ENCODE measurements at regions of chrX and their contacts with region 1.

Region 1: DNA sequence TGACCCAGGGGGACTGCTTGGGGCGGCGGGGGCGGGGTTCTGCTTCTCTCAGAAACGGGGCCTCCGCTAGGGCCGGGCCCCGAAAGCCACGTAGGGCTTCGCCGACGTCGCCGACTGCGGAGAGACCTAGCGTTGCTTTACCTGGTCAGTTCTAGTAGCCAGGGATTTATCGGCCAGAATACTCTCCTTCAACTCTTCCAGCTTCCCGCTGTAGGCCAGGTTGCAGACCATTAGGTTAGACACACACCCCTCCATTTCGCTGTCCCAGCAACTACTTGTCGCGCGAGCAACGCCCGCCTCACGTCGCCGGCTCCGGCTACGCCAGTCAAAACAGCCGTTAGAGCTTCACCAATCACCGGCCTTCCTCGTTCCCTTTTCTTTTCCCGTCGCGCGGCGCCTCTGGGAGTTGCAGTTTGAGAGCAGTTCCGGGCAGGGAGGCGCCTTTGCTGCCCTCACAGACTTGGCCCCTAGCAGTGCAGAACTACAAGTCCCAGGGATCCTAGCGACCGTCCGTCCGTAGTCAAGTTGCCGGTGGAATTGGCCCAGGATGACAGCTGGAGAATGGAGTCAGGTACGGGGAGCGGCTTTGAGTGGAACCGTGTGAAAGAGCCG is at the starts of genes ATG4A and PSMD10:
- DNase-seq: peak; percentile 87 to 96
- H3K4me3 ChIP-seq: peak within 1 kb of the TSS; percentile 51 to 77
- H3K27ac ChIP-seq: peak within 1 kb of the TSS; percentile 62 to 80
- H3K4me1 ChIP-seq: no peaks in the 10 kb centered on the region
- H3K27me3 ChIP-seq: no peaks in the 10 kb centered on the region
- CTCF ChIP-seq: no peak
- total RNA-seq, gene ATG4A: 15.0 TPM
- total RNA-seq, gene PSMD10: 11.5 TPM

Region 2: GRCh38 chrX:106802387-106803275 is 1288.7 kb before region 1 on chrX and contains the start of gene TBC1D8B:
- intact Hi-C with region 1: loop called (anchors 2 kb)
- DNase-seq: peak; percentile 22 to 87
- H3K4me3 ChIP-seq: peak within 1 kb of the TSS; percentile 62 to 69
- H3K27ac ChIP-seq: peak within 1 kb of the TSS in 1 of 2 donors; percentile 11
- H3K4me1 ChIP-seq: no peaks in the 10 kb centered on the region
- H3K27me3 ChIP-seq: no peaks in the 10 kb centered on the region
- CTCF ChIP-seq: no peak
- total RNA-seq, gene TBC1D8B: 7.1 TPM

Region 3: DNA sequence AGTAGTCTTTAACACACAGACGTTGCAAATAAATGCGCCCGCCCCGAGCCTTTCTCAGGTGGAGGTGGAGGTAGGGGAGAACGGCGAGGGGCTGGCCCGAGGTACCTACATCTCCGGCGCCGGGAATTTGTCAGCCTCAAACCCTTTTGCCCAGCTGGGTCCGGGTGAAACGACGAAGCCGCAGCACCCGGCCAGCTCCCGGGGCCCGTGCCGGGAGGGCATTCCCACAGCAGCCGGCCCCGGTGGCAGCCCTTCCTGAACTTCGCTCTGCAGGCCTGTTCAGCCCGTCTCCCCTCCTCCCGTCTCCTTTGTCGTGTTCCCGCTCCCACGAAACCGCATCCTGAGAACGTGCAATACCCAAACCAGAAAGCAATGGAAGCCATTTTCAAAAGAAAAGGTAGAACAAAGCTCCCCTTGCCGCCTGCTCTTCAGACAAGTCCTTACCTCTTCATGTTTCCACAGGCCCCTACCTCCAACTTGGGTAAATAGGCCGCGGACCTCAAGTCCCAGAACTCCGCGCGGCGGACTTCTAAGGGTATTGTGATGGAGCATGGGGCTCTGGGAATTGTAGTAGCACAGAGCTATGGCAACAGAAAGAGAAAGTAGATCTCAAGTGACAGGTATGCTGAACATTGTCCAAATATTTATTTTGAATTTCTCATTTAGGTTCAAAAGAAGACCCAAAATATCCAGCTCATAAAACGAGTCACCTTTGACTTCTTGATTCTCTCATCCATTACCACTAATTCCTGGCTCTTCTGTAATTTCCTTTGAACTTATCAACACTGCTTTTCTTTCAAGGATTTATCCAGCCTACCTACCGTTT is 972.8 kb before region 1 on chrX and contains the start of gene RBM41:
- intact Hi-C with region 1: loop called (anchors 5 kb)
- DNase-seq: peak; percentile 48 to 80
- H3K4me3 ChIP-seq: peak within 1 kb of the TSS; percentile 60 to 66
- H3K27ac ChIP-seq: peak within 1 kb of the TSS; percentile 8 to 42
- H3K4me1 ChIP-seq: no peaks in the 10 kb centered on the region
- H3K27me3 ChIP-seq: no peaks in the 10 kb centered on the region
- CTCF ChIP-seq: no peak
- total RNA-seq, gene RBM41: 4.6 TPM

Region 4: DNA sequence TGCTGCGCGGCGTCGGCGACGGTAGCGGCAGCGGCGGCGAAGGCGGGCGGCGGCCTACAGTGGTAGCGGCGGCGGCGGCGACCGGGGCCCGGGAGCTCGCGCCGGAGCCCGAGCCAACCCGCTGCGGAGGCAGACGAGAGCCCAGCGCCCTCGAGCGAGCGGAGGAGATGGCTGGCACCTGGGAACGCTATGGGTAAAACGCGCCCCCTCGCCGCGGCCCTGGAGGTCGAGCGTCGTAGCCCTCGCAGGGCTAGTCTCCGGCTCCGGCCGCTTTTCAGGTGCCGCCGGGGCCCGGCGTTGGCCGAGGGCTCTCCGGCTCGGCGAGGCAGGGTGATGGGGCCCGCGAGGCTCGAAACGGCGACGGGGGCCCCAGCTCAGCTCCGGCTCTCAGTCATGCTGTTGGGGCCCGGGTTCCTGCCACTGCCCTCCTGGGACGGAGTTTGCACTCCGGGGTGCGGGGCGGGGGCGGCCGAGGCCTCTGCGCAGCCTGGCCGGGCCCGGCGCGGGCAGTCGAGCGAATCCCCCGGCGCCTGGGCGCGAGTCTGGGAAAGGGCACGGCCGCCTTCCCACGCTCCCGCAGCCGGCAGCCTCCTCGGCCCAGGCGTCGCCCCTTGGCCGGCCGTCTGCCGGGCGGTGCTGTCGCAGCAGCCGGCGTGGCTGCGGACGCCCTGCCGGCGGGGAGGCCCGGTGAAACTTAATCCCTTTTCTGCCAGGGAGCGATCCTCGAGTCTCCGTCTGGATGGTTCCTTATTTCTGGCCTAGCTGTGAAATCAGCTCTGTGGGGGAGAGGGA is 264.9 kb before region 1 on chrX:
- intact Hi-C with region 1: loop called (anchors 5 kb)
- DNase-seq: peak in 1 of 2 donors; percentile 65
- H3K4me3 ChIP-seq: peak overlapping the region; percentile 57 to 73
- H3K27ac ChIP-seq: peak overlapping the region; percentile 93 to 98
- H3K4me1 ChIP-seq: no peaks in the 10 kb centered on the region
- H3K27me3 ChIP-seq: peaks cover 4% of the 10 kb centered on the region
- CTCF ChIP-seq: no peak

Region 5: GRCh38 chrX:108029928-108030711 is 61.3 kb before region 1 on chrX:
- intact Hi-C with region 1: no loop called
- DNase-seq: no peak
- H3K4me3 ChIP-seq: no peak overlapping the region
- H3K27ac ChIP-seq: no peak overlapping the region
- H3K4me1 ChIP-seq: no peaks in the 10 kb centered on the region
- H3K27me3 ChIP-seq: no peaks in the 10 kb centered on the region
- CTCF ChIP-seq: no peak

Region 6: GRCh38 chrX:109536439-109537336 is 1445.3 kb after region 1 on chrX and contains the start of gene NXT2:
- intact Hi-C with region 1: loop called (anchors 5 kb)
- DNase-seq: peak; percentile 67 to 93
- H3K4me3 ChIP-seq: peak within 1 kb of the TSS; percentile 55 to 66
- H3K27ac ChIP-seq: peak within 1 kb of the TSS; percentile 86 to 89
- H3K4me1 ChIP-seq: no peaks in the 10 kb centered on the region
- H3K27me3 ChIP-seq: no peaks in the 10 kb centered on the region
- CTCF ChIP-seq: no peak
- total RNA-seq, gene NXT2: 1.8 TPM